GM18951 (cell line): ENCODE measurements at regions of chr7 and their contacts with region 1.

Region 1: GRCh38 chr7:7103343-7104313 is 78.7 kb upstream of the C1GALT1 start:
- POLR2A ChIP-seq: no peak

Region 2: GRCh38 chr7:6505685-6506574 is 597.7 kb before region 1 on chr7:
- in situ Hi-C with region 1: no loop called
- POLR2A ChIP-seq: no peak

Region 3: GRCh38 chr7:7535691-7536090 is 432.1 kb after region 1 on chr7 and contains the start of gene COL28A1:
- in situ Hi-C with region 1: loop called (anchors 5 kb)
- POLR2A ChIP-seq: no peak

Region 4: GRCh38 chr7:8217200-8218068 is 1113.8 kb after region 1 on chr7:
- in situ Hi-C with region 1: loop called (anchors 25 kb)
- POLR2A ChIP-seq: no peak